PC-9 (cell line): ENCODE measurements at regions of chrX and their contacts with region 1.

Region 1: DNA sequence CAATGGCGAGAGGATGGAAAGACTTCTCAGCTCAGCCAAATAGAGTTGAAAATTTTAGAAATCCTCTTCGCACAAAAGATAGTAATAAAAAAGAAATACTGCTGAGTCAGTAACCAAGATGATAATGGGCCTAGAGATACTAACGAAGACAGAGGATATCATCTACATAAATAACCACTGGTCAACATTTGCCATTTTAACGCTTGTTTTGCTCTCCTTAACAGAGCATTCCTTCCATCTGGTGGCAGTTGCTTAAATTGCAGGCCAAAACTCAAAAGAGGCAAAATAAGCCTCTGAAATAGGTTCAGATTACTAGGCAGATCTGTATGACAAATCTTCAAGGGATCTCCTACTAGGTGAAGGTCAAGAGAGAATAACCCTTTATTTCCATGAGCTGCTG is 51.7 kb upstream of the MCF2 start:
- DNase-seq: peak in 1 of 2 experiments; percentile 0
- H3K4me3 ChIP-seq: no peak overlapping the region
- H3K27ac ChIP-seq: no peak overlapping the region
- H3K4me1 ChIP-seq: no peaks in the 10 kb centered on the region
- H3K27me3 ChIP-seq: no peaks in the 10 kb centered on the region
- CTCF ChIP-seq: peak; percentile 60

Region 2: DNA sequence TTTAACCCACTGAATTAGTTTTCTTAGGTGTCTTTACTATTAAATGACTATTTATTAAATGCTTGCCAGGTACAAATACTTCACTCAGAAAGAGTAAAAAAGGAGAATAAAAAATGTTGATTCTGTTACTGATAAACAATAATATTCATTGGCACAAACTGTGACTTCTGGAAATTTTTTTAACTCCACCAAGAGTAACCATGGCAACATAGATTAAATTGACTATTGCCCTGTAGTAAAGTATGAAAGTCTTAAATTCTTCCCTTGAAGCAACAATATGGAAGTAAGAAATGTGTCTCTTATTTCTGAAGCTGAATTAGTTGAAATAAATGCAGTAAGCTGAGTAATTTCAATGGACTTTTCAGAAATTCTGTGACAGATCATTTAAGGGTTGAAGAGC is 1214.3 kb before region 1 on chrX:
- CTCF ChIA-PET with region 1: no interaction called
- POLR2A ChIA-PET with region 1: no interaction called
- intact Hi-C with region 1: no loop called
- DNase-seq: no peak
- H3K4me3 ChIP-seq: no peak overlapping the region
- H3K27ac ChIP-seq: no peak overlapping the region
- H3K4me1 ChIP-seq: no peaks in the 10 kb centered on the region
- H3K27me3 ChIP-seq: no peaks in the 10 kb centered on the region
- CTCF ChIP-seq: no peak

Region 3: GRCh38 chrX:139454756-139455155 is 304.9 kb before region 1 on chrX:
- CTCF ChIA-PET with region 1: no interaction called
- POLR2A ChIA-PET with region 1: no interaction called
- intact Hi-C with region 1: loop called (anchors 5 kb)
- DNase-seq: no peak
- H3K4me3 ChIP-seq: no peak overlapping the region
- H3K27ac ChIP-seq: no peak overlapping the region
- H3K4me1 ChIP-seq: no peaks in the 10 kb centered on the region
- H3K27me3 ChIP-seq: no peaks in the 10 kb centered on the region
- CTCF ChIP-seq: no peak